HEK293T (cell line): ENCODE measurements at regions of chr5 and their contacts with region 1.

Region 1: GRCh38 chr5:54905943-54906537 is 79.4 kb downstream of the ESM1 start:
- DNase-seq: peak; percentile 53

Region 2: GRCh38 chr5:54624805-54625561 is 281.1 kb before region 1 on chr5:
- CTCF ChIA-PET with region 1: no interaction called
- POLR2A ChIA-PET with region 1: no interaction called
- DNase-seq: no peak

Region 3: GRCh38 chr5:55146543-55147151 is 240.6 kb after region 1 on chr5:
- CTCF ChIA-PET with region 1: interaction called, 13 read pairs
- POLR2A ChIA-PET with region 1: no interaction called
- DNase-seq: peak; percentile 82

Region 4: DNA sequence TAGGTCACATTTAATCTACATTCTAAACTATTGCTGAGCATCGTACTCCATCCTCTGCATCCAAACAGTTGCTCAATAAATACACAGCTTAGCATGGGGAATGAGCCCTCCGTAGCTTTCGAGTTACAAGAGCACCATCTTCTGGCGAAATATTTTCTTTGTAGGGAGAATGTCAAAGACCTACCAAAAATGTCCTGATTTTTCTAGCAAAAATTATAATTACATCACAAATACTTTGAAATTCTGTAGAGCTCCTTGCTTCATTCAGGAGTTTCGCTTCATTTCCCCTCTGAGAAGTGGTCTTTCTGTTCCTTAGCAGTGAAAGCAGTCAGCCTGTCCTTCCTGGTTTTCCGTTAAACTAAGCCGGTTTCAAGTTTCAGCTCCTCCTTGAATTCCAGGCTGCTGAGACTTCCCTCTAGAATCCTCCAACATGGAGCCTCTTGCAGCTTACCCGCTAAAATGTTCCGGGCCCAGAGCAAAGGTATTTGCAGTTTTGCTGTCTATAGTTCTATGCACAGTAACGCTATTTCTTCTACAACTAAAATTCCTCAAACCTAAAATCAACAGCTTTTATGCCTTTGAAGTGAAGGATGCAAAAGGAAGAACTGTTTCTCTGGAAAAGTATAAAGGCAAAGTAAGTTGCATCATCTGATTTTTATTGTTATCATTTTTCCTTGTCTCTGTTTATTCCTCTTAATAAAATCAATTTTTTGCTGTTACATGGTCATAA is 253.9 kb after region 1 on chr5 and contains the start of gene GPX8:
- CTCF ChIA-PET with region 1: interaction called, 18 read pairs
- POLR2A ChIA-PET with region 1: interaction called, 4 read pairs
- DNase-seq: peak; percentile 72